PC-9 (cell line): ENCODE measurements at regions of chr11 and their contacts with region 1.

Region 1: GRCh38 chr11:134705858-134706257 is 293.8 kb upstream of the B3GAT1 start:
- DNase-seq: no peak
- H3K4me3 ChIP-seq: no peak overlapping the region
- H3K27ac ChIP-seq: no peak overlapping the region
- H3K4me1 ChIP-seq: no peaks in the 10 kb centered on the region
- H3K27me3 ChIP-seq: peaks cover 54% of the 10 kb centered on the region
- CTCF ChIP-seq: no peak

Region 2: GRCh38 chr11:134360050-134360835 is 345.6 kb before region 1 on chr11:
- CTCF ChIA-PET with region 1: no interaction called
- POLR2A ChIA-PET with region 1: no interaction called
- intact Hi-C with region 1: loop called (anchors 5 kb)
- DNase-seq: peak in 1 of 2 experiments; percentile 73
- H3K4me3 ChIP-seq: no peak overlapping the region
- H3K27ac ChIP-seq: no peak overlapping the region
- H3K4me1 ChIP-seq: peaks cover under 1% of the 10 kb centered on the region; the same call in 1 of the 2 replicates
- H3K27me3 ChIP-seq: no peaks in the 10 kb centered on the region
- CTCF ChIP-seq: peak; percentile 74